MCF 10A (cell line): ENCODE measurements at regions of chr3 and their contacts with region 1.

Region 1: DNA sequence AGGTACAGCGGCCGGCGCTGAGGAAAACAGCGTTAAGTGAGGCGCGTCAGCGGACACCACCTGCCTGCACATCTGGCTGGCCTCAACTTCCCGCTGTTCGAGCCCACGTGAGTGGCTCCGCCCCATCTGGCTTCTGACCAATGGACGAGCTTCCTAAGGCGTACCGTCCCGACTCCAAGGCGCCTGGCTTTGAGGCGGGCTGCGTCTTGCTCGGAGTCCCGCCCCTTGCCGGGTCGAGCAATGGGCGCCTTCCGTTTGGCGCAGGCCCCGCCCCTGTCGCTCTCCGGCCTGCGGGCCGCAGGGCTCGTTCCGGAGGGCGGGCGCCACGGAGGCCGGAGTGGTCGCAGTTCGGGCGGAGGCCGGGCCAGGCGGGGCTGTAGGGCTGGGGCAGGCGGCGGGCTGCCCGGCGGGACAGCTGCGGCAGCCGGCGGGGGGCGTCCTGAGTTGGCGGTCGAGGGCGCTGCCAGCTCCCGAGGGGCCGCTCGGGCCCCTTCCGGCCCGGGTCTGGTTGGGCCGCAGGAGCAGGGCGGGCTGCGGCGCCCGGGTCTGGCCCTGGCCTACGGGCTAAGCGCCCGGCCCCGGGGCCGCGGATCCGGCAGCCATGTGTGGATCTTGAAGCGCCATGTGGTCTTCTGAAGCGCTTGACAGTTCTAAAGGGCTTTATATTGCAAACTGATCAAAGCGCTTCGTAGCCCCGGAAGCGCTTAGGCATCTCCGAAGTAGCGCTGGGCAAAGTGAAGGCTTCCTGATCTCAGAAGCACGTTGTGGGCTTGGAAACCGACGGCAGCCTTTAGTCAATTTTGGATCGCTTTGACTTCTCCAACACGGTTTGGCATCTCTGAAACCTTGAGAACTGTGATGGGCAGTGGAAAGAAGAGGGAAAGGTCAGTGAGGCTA is at the start of gene TATDN2:
- DNase-seq: peak; percentile 98
- H3K4me3 Mint-ChIP-seq: peak within 1 kb of the TSS; percentile 90
- H3K27ac Mint-ChIP-seq: peak within 1 kb of the TSS; percentile 69
- H3K4me1 Mint-ChIP-seq: peaks cover 32% of the 10 kb centered on the region
- H3K27me3 Mint-ChIP-seq: no peaks in the 10 kb centered on the region
- CTCF ChIP-seq: no peak
- total RNA-seq, gene TATDN2: 21.0 and 25.9 TPM in 2 replicates

Region 2: GRCh38 chr3:10142707-10143566 is 105.5 kb before region 1 on chr3:
- CTCF ChIA-PET with region 1: no interaction called
- POLR2A ChIA-PET with region 1: interaction called, 18 read pairs
- intact Hi-C with region 1: no loop called
- DNase-seq: peak; percentile 38
- H3K4me3 Mint-ChIP-seq: peak overlapping the region; percentile 86
- H3K27ac Mint-ChIP-seq: peak overlapping the region; percentile 92
- H3K4me1 Mint-ChIP-seq: peaks cover 6% of the 10 kb centered on the region
- H3K27me3 Mint-ChIP-seq: no peaks in the 10 kb centered on the region
- CTCF ChIP-seq: no peak

Region 3: DNA sequence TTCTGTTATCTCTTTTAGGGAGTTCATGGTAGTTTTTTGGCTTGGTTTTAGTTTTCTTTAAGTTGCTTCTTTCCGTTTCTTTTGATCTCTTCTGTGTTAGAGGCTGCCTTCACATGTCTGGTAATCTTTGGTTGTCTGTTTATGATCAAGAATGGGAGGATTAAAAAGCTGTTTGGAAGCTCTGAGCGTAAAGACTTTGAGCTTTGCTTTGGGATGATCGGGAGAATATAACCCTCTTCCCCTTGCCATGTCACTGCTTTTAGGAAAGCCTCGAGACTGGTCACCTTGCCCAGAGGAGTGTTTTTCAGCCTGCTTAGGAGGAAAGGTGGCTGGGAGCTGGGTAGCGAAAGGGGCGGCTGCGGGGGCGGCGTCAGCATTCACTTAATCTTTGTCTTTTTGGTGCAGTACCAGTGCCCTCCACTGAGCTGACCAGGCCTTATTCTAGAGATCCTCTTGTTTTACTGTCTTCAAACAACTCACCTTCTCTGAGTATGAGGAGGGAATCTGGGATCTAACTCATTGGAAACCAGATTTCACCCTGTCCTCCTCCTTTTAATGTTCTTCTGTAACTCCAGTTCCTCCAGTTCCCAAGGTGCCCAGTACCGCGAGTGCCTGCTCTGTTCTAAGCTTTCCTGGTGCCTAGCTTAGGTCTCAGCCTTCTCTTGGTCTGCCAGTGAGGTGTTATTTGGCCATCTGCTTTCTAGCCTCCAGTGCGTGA is 15.4 kb after region 1 on chr3:
- CTCF ChIA-PET with region 1: no interaction called
- POLR2A ChIA-PET with region 1: interaction called, 12 read pairs
- intact Hi-C with region 1: no loop called
- DNase-seq: peak; percentile 38
- H3K4me3 Mint-ChIP-seq: no peak overlapping the region
- H3K27ac Mint-ChIP-seq: peak overlapping the region; percentile 49
- H3K4me1 Mint-ChIP-seq: peaks cover 12% of the 10 kb centered on the region
- H3K27me3 Mint-ChIP-seq: no peaks in the 10 kb centered on the region
- CTCF ChIP-seq: peak; percentile 16